CD4-positive, alpha-beta T cell (primary cell): ENCODE measurements at regions of chr22 and their contacts with region 1.

Region 1: GRCh38 chr22:31489604-31490495 is at the start of gene EIF4ENIF1:
- DNase-seq: peak; percentile 78 to 93 (median 84)
- ATAC-seq: peak; percentile 77
- H3K4me3 ChIP-seq: peak within 1 kb of the TSS; percentile 78
- H3K4me3 Mint-ChIP-seq: peak within 1 kb of the TSS; percentile 91
- H3K27ac ChIP-seq: peak within 1 kb of the TSS; percentile 88 to 92
- H3K27ac Mint-ChIP-seq: peak within 1 kb of the TSS; percentile 97
- H3K4me1 ChIP-seq: peaks cover 38% of the 10 kb centered on the region
- H3K4me1 Mint-ChIP-seq: peaks cover 57% of the 10 kb centered on the region
- H3K27me3 ChIP-seq: no peaks in the 10 kb centered on the region
- H3K27me3 Mint-ChIP-seq: no peaks in the 10 kb centered on the region
- CTCF ChIP-seq: no peak
- total RNA-seq, gene EIF4ENIF1: 9.4 to 10.6 TPM

Region 2: DNA sequence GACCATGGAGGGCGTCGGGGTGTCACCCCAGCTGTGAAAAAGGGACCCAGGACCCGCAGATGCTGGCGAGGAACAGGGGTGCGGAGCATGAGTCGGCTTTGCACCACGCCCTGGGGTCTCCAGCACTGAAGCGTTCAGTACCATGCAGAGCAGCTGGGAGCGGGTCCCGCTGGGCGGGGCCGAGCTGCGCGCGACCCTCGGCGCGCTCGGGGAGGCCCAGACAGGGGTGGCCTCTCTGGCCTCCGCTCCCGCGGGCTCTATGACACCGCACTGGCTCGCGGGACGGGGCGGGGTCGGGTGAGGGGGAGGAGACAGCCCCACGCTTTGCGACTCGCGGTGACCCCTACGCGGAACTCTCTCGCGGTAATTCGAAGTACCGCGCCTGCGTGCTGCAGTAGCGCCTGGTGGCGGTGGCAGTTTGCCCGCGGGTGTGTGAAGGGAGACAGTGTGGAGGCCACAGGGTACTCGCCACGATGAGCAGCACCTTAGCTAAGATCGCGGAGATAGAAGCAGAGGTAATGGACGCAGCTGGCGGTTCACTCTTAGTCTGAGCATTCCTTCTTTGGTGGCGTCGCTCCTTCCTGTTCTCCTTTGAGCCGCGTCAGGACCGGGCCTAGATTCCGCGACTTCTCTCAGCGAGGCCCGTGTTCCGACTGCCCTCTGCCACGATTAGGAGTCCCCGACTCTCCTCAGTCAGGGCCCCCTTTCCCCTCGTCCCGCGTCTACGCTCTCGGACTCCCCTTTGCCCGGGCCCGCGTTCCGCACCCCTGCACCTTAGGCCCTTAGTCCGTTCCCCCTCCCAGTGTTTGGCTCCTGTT is 90.4 kb before region 1 on chr22 and contains the start of gene DRG1:
- CTCF ChIA-PET with region 1: no interaction called
- POLR2A ChIA-PET with region 1: interaction called, 3 read pairs
- intact Hi-C with region 1: loop called in 1 of 2 experiments (anchors 2 kb)
- DNase-seq: peak; percentile 92 to 98 (median 96)
- ATAC-seq: peak; percentile 97
- H3K4me3 ChIP-seq: peak within 1 kb of the TSS; percentile 90
- H3K4me3 Mint-ChIP-seq: peak within 1 kb of the TSS; percentile 94
- H3K27ac ChIP-seq: peak within 1 kb of the TSS; percentile 77 to 81
- H3K27ac Mint-ChIP-seq: peak within 1 kb of the TSS; percentile 83
- H3K4me1 ChIP-seq: peaks cover 22% of the 10 kb centered on the region
- H3K4me1 Mint-ChIP-seq: peaks cover 18% of the 10 kb centered on the region
- H3K27me3 ChIP-seq: no peaks in the 10 kb centered on the region
- H3K27me3 Mint-ChIP-seq: no peaks in the 10 kb centered on the region
- CTCF ChIP-seq: no peak
- total RNA-seq, gene DRG1: 57.3 to 72.8 TPM